Calu3 (cell line): ENCODE measurements at regions of chr6 and their contacts with region 1.

Region 1: DNA sequence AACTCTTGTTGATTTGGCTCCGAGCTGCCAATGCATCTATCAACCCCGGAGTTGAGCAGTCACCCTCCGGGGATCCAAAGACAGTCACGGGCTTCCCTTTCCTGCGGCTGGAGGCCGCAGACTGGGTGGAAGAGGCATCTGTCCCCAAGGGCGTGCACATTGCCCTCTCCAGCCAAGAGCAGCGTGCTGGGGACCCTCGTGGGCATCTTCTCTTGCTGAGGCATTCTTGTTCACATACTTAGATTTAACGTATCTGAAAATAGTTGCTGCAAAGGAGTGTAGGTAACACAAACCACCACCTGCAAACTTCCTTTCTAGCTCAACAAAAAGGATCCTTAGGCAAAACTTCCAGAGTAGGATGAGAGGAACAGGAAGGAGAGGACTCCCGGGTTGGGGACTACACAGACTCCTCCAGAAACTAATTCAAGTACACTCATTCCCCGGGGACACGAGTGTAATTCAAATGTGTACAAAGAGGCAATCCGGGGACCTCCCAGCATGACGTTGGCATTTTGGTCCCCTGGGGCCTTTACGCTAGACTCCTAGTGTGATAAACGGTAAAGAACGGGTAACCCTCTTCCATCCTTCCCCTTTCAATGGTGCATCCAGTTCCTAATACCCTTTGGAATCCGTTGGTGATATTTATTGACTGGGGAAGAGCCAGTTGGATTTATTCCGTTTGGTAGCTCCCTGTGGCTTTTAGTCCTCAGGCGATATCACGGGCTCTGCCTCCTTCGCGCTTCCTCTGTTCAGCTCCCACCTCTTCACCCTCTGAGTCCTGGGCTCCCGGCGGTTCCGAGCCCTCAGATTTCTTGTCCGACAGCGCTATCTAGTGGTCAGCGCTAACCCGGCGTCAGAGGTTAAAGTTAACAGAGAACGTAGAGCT is 2.7 kb upstream of the COL12A1 start:
- DNase-seq: peak; percentile 85
- H3K4me3 Mint-ChIP-seq: peak overlapping the region; percentile 14
- H3K27ac Mint-ChIP-seq: no peak overlapping the region
- H3K4me1 Mint-ChIP-seq: peaks cover 37% of the 10 kb centered on the region
- H3K27me3 Mint-ChIP-seq: peaks cover 32% of the 10 kb centered on the region
- CTCF ChIP-seq: peak; percentile 78

Region 2: GRCh38 chr6:73739096-73739495 is 1469.4 kb before region 1 on chr6:
- CTCF ChIA-PET with region 1: interaction called, 16 read pairs
- intact Hi-C with region 1: loop called (anchors 1 kb)
- DNase-seq: no peak
- H3K4me3 Mint-ChIP-seq: no peak overlapping the region
- H3K27ac Mint-ChIP-seq: no peak overlapping the region
- H3K4me1 Mint-ChIP-seq: no peaks in the 10 kb centered on the region
- H3K27me3 Mint-ChIP-seq: no peaks in the 10 kb centered on the region
- CTCF ChIP-seq: peak; percentile 44

Region 3: DNA sequence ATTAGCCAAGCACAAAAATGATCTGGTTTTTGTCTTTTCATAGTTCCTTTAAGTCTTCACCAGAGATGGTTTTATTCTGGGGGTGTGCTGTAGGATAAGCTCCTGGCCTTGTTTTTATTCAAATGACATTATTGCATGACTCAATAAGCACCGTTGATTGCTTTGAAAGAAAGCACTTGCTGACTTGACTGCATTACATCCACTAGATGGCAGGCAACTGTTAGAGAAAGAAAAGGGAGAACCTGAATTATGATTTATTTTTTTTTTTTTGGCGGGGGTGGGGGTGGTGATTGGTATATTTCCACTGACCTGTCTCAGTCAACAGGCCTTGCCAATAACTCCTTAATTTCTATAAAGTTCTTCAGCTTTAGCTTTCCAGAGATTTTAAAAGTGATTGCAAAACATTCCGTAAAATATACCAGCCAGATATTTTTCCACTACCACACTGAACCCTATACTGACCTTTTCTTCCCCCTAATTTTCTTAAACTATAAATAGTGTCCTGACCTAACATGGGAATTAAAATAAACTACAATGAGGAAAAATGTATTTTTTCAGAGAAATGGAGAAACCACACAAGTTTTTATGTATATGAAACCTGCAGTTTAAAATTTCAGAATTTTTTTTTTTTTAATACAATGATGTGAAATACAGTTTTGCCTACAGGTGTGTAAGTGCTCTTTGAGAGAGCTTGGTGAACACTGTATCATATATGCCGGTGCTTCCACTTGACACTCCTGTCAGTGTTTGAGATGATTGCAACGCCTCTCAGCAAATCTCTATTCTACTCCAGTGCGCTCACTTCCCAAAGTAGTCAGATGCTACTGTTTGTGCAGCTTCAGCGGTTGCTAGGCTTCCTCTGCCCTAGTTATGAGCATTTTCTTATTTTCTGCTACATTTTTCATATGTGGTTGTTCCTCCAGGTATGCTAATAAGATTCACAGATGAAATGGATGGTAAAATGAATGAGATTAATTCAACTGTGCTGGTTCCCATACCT is 1238.3 kb before region 1 on chr6:
- CTCF ChIA-PET with region 1: interaction called, 6 read pairs
- intact Hi-C with region 1: loop called (anchors 2 kb)
- DNase-seq: peak; percentile 20
- H3K4me3 Mint-ChIP-seq: no peak overlapping the region
- H3K27ac Mint-ChIP-seq: no peak overlapping the region
- H3K4me1 Mint-ChIP-seq: no peaks in the 10 kb centered on the region
- H3K27me3 Mint-ChIP-seq: no peaks in the 10 kb centered on the region
- CTCF ChIP-seq: peak; percentile 33

Region 4: DNA sequence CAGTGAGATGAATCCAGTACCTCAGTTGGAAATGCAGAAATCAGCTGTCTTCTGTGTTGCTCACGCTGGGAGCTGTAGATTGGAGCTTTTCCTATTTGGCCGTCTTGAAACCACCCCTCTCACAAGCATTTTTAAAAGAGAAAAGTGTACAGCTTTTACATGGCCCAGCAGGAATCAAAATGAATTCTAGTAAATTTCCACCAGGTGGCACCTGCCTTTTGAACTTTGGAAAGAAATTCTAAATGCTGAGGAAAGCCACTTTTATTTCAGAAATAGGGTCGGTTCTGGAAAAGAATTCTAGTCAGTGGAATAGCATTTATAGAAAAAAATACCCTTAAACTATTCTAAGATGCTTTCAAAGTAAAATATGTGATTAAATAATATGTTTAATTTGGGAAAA is 864.7 kb before region 1 on chr6:
- CTCF ChIA-PET with region 1: interaction called, 3 read pairs
- intact Hi-C with region 1: loop called (anchors 5 kb)
- DNase-seq: no peak
- H3K4me3 Mint-ChIP-seq: no peak overlapping the region
- H3K27ac Mint-ChIP-seq: no peak overlapping the region
- H3K4me1 Mint-ChIP-seq: no peaks in the 10 kb centered on the region
- H3K27me3 Mint-ChIP-seq: no peaks in the 10 kb centered on the region
- CTCF ChIP-seq: peak; percentile 32

Region 5: DNA sequence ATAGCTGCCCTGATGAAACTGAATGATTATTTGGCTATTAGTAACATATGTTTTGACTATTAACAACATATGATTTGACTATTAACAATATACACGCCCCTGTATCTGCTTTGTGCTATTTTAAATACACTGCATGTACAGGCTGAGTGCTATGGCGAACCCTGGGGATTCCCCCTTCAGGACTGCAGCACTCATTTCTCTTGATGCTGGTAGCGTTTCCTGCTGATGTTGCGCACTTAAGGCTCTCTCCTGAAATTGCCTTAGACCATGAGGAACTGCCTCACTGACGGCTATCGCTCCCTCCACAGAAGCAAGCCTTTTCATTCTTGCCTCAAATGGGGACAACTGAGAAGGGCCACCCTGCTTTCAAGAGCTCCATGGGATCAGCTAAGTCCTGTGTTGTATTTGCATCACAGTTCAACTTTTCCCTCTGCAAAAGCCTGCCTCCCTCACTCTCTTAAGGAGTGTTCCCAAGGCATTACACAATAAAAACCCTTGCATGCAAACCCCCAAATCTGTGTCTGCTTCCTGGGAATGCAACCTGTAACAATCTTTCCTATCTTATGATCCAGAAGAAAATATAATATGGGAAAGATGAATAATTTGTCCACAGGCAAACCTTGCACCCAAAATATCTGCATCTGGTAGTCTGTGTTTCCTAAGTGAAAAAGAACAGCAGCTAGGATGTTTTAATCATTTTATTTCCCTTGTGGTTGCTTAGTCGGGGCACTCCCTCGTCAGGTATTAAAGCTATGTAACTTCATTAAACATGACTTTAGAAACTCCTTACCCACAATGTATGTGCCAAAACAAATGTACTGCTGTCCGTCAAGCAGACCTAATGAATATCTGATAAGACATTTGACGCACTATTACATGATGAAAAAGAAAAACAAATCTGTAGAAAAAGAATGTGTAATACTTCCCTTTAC is 459.1 kb before region 1 on chr6:
- CTCF ChIA-PET with region 1: no interaction called
- intact Hi-C with region 1: loop called (anchors 5 kb)
- DNase-seq: peak; percentile 39
- H3K4me3 Mint-ChIP-seq: peak overlapping the region; percentile 46
- H3K27ac Mint-ChIP-seq: peak overlapping the region; percentile 36
- H3K4me1 Mint-ChIP-seq: peaks cover 21% of the 10 kb centered on the region
- H3K27me3 Mint-ChIP-seq: no peaks in the 10 kb centered on the region
- CTCF ChIP-seq: no peak

Region 6: GRCh38 chr6:75098709-75099108 is 109.8 kb before region 1 on chr6:
- CTCF ChIA-PET with region 1: no interaction called
- intact Hi-C with region 1: loop called (anchors 5 kb)
- DNase-seq: peak; percentile 49
- H3K4me3 Mint-ChIP-seq: no peak overlapping the region
- H3K27ac Mint-ChIP-seq: peak overlapping the region; percentile 71
- H3K4me1 Mint-ChIP-seq: peaks cover 25% of the 10 kb centered on the region
- H3K27me3 Mint-ChIP-seq: no peaks in the 10 kb centered on the region
- CTCF ChIP-seq: no peak